CD8-positive, alpha-beta T cell (primary cell): ENCODE measurements at regions of chr6 and their contacts with region 1.

Region 1: GRCh38 chr6:13711733-13712598 is at the start of gene RANBP9:
- DNase-seq: peak; percentile 76 to 94 (median 86)
- ATAC-seq: peak; percentile 82
- H3K4me3 ChIP-seq: peak within 1 kb of the TSS; percentile 77 to 81
- H3K4me3 Mint-ChIP-seq: peak within 1 kb of the TSS; percentile 93
- H3K27ac ChIP-seq: peak within 1 kb of the TSS; percentile 77 to 83
- H3K27ac Mint-ChIP-seq: peak within 1 kb of the TSS; percentile 97
- H3K4me1 ChIP-seq: peaks cover 22% of the 10 kb centered on the region
- H3K4me1 Mint-ChIP-seq: peaks cover 43% of the 10 kb centered on the region
- H3K27me3 ChIP-seq: no peaks in the 10 kb centered on the region
- H3K27me3 Mint-ChIP-seq: no peaks in the 10 kb centered on the region
- CTCF ChIP-seq: no peak
- total RNA-seq, gene RANBP9: 79.1 to 81.9 TPM

Region 2: DNA sequence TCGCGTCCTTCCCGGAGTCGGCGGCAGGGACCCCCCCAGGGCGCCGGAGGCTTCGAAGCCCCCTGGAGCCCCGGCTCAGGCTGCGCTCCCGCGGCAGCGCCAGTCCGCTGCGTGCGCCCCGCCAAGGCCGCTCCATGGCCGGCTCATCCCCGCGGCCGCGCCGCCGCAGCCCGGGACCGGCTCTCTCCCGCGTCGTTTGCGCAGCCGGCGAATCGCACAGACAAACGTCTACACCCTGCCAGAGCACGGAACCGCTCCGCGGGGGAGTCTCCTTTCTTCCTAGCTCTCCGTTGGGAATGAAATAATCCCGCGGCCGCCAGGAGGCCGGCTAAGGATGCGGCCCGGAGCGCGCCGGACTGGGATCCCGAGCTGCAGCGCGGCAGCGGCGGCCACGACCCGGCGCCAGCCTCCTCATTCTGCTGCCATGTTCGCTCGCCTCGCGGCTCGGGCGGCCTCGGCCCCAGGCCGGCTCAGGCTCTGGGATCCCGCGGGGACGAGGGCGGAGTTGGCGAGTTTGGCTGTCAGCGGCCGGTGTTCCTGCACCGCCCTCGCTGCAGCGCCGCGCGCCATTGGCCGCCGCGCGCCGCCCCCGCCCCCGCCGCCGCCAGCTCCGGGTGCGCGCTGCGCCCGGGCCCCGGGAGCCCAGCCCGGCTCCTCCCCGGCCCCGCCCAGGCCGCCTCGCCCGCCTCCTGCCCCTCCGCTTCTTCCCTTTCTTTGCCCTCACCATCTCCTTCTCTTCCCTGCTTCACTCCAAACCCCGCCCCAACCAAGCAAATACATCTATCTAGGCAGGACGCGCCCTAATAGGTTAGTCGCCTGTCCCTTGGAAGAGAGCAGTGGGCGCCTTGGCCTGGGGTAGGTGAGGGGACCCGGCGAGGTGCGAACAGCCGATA is 224.6 kb before region 1 on chr6 and contains the start of gene GFOD1:
- CTCF ChIA-PET with region 1: no interaction called
- POLR2A ChIA-PET with region 1: no interaction called
- intact Hi-C with region 1: loop called in 1 of 2 experiments (anchors 2 kb)
- DNase-seq: peak; percentile 28 to 87 (median 69)
- ATAC-seq: peak; percentile 76
- H3K4me3 ChIP-seq: peak within 1 kb of the TSS; percentile 72 to 80
- H3K4me3 Mint-ChIP-seq: peak within 1 kb of the TSS; percentile 86
- H3K27ac ChIP-seq: peak within 1 kb of the TSS; percentile 36 to 51
- H3K27ac Mint-ChIP-seq: peak within 1 kb of the TSS; percentile 60
- H3K4me1 ChIP-seq: peaks cover 11% of the 10 kb centered on the region
- H3K4me1 Mint-ChIP-seq: peaks cover 36% of the 10 kb centered on the region
- H3K27me3 ChIP-seq: no peaks in the 10 kb centered on the region
- H3K27me3 Mint-ChIP-seq: peaks cover 7% of the 10 kb centered on the region
- CTCF ChIP-seq: no peak
- total RNA-seq, gene GFOD1: 5.6 to 7.6 TPM

Region 3: GRCh38 chr6:13624871-13625288 is 87.1 kb before region 1 on chr6:
- CTCF ChIA-PET with region 1: interaction called, 5 read pairs
- POLR2A ChIA-PET with region 1: interaction called, 5 read pairs
- intact Hi-C with region 1: loop called in 1 of 2 experiments (anchors 2 kb)
- DNase-seq: peak in 3 of 9 experiments; percentile 26 to 70 (median 58)
- ATAC-seq: peak; percentile 90
- H3K4me3 ChIP-seq: no peak overlapping the region
- H3K4me3 Mint-ChIP-seq: no peak overlapping the region
- H3K27ac ChIP-seq: no peak overlapping the region
- H3K27ac Mint-ChIP-seq: peak overlapping the region; percentile 72
- H3K4me1 ChIP-seq: no peaks in the 10 kb centered on the region
- H3K4me1 Mint-ChIP-seq: peaks cover 16% of the 10 kb centered on the region
- H3K27me3 ChIP-seq: no peaks in the 10 kb centered on the region
- H3K27me3 Mint-ChIP-seq: no peaks in the 10 kb centered on the region
- CTCF ChIP-seq: no peak

Region 4: DNA sequence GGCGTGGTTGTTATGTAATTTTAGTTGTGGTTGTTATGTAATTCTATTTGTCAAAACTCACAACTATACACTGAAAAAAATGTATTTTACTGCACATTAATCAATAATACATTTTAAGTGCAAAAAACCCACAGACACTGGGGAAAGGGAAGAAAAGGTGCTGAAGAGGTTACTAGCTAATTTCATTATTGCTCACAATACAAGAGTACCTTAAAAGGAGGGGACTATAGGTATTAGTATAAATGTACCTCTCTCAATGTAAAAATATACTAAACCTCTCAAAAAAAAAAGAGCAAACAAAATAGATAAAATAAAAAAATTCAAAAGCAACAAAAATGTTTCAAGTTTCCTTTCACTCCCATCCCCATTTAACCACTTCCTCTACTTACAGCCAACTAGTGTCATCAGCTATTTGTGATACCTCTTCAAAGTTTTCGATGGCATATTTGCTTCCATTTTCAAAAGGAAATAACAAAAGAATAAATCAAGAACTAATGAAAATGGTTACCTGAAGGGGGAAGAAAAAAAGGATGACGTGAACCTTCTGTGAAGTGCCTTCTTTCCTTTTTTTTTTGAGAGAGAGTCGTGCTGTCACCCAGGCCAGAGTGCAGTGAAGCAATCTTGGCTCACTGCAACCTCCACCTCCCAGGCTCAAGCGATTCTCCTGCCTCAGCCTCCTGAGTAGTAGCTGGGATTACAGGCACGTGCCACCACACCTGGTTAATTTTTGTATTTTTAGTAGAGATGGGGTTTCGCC is 30.5 kb before region 1 on chr6:
- CTCF ChIA-PET with region 1: interaction called, 3 read pairs
- POLR2A ChIA-PET with region 1: interaction called, 16 read pairs
- intact Hi-C with region 1: loop called in 1 of 2 experiments (anchors 5 kb)
- DNase-seq: peak in 3 of 9 experiments; percentile 25 to 73 (median 49)
- ATAC-seq: peak; percentile 79
- H3K4me3 ChIP-seq: peak overlapping the region in 1 of 2 experiments; percentile 7
- H3K4me3 Mint-ChIP-seq: peak overlapping the region; percentile 55
- H3K27ac ChIP-seq: peak overlapping the region; percentile 26 to 65
- H3K27ac Mint-ChIP-seq: peak overlapping the region; percentile 88
- H3K4me1 ChIP-seq: peaks cover 39% of the 10 kb centered on the region
- H3K4me1 Mint-ChIP-seq: peaks cover 66% of the 10 kb centered on the region
- H3K27me3 ChIP-seq: no peaks in the 10 kb centered on the region
- H3K27me3 Mint-ChIP-seq: no peaks in the 10 kb centered on the region
- CTCF ChIP-seq: no peak

Region 5: GRCh38 chr6:13696226-13696625 is 15.7 kb before region 1 on chr6:
- CTCF ChIA-PET with region 1: interaction called, 4 read pairs
- POLR2A ChIA-PET with region 1: interaction called, 9 read pairs
- intact Hi-C with region 1: loop called (anchors 2 kb)
- DNase-seq: no peak
- ATAC-seq: no peak
- H3K4me3 ChIP-seq: no peak overlapping the region
- H3K4me3 Mint-ChIP-seq: no peak overlapping the region
- H3K27ac ChIP-seq: peak overlapping the region in 1 of 2 experiments; percentile 62
- H3K27ac Mint-ChIP-seq: peak overlapping the region; percentile 74
- H3K4me1 ChIP-seq: peaks cover 54% of the 10 kb centered on the region
- H3K4me1 Mint-ChIP-seq: peaks cover 80% of the 10 kb centered on the region
- H3K27me3 ChIP-seq: no peaks in the 10 kb centered on the region
- H3K27me3 Mint-ChIP-seq: no peaks in the 10 kb centered on the region
- CTCF ChIP-seq: no peak

Region 6: GRCh38 chr6:13767121-13767808 is 55.3 kb after region 1 on chr6:
- CTCF ChIA-PET with region 1: interaction called, 3 read pairs
- POLR2A ChIA-PET with region 1: no interaction called
- intact Hi-C with region 1: loop called (anchors 1 to 2 kb)
- DNase-seq: peak; percentile 11 to 77 (median 53)
- ATAC-seq: peak; percentile 83
- H3K4me3 ChIP-seq: peak overlapping the region; percentile 16 to 21
- H3K4me3 Mint-ChIP-seq: peak overlapping the region; percentile 73
- H3K27ac ChIP-seq: no peak overlapping the region
- H3K27ac Mint-ChIP-seq: no peak overlapping the region
- H3K4me1 ChIP-seq: peaks cover 18% of the 10 kb centered on the region
- H3K4me1 Mint-ChIP-seq: peaks cover 33% of the 10 kb centered on the region
- H3K27me3 ChIP-seq: no peaks in the 10 kb centered on the region
- H3K27me3 Mint-ChIP-seq: no peaks in the 10 kb centered on the region
- CTCF ChIP-seq: peak; percentile 10

Region 7: GRCh38 chr6:14117158-14118090 is 405.5 kb after region 1 on chr6 and contains the start of gene CD83:
- CTCF ChIA-PET with region 1: no interaction called
- POLR2A ChIA-PET with region 1: no interaction called
- intact Hi-C with region 1: loop called (anchors 2 to 5 kb)
- DNase-seq: peak; percentile 72 to 97 (median 84)
- ATAC-seq: peak; percentile 94
- H3K4me3 ChIP-seq: peak within 1 kb of the TSS; percentile 90 to 92
- H3K4me3 Mint-ChIP-seq: peak within 1 kb of the TSS; percentile 93
- H3K27ac ChIP-seq: peak within 1 kb of the TSS; percentile 66 to 81
- H3K27ac Mint-ChIP-seq: peak within 1 kb of the TSS; percentile 96
- H3K4me1 ChIP-seq: peaks cover 8% of the 10 kb centered on the region
- H3K4me1 Mint-ChIP-seq: peaks cover 39% of the 10 kb centered on the region
- H3K27me3 ChIP-seq: no peaks in the 10 kb centered on the region
- H3K27me3 Mint-ChIP-seq: no peaks in the 10 kb centered on the region
- CTCF ChIP-seq: no peak
- total RNA-seq, gene CD83: 57.2 to 60.4 TPM